H1 (cell line): ENCODE measurements at regions of chr5 and their contacts with region 1.

Region 1: DNA sequence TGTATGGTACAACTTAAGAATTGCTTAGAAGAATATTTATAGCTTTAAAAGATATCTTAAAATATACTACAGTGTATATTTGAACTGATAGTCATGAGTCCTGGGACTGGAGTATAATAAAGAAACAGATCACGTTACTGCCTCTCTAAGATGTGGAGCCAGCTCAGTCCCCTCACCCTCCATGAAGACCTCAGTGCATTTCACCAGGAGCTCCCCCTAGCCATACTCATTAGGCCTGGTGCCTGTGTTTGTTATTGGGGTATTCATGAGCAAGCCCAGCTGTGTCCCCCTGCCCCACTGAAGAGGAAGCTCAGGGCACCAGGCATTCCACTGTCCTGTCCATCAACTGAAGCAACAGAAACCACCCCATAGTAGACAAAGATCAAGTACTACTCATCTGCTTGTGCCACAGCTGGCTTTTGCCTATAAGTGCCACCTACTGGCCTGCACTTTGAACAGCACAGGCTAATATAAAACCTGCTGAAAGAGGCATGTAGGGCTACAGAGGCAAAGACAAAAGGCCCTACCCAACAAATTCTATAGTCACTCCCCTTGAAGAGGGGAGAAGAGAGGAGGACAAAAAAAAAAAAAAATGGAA is 850.2 kb upstream of the NUDT12 start:
- DNase-seq: peak; percentile 13 to 51
- H3K4me3 ChIP-seq: no peak overlapping the region
- H3K27ac ChIP-seq: no peak overlapping the region
- H3K4me1 ChIP-seq: peaks cover 0 to 4% (median 0%) of the 10 kb centered on the region in 4 experiments; a peak in 1 of 7 replicates
- H3K27me3 ChIP-seq: no peaks in the 10 kb centered on the region
- CTCF ChIP-seq: peak in 2 of 3 experiments; percentile 58 to 73; a peak in 3 of 4 replicates
- EP300 ChIP-seq: no peak
- POLR2A ChIP-seq: no peak
- RAD21 ChIP-seq: peak; percentile 56 to 77

Region 2: GRCh38 chr5:104400941-104401340 is 11.8 kb before region 1 on chr5:
- CTCF ChIA-PET with region 1: interaction called, 10 read pairs
- POLR2A ChIA-PET with region 1: no interaction called
- DNase-seq: no peak
- H3K4me3 ChIP-seq: no peak overlapping the region
- H3K27ac ChIP-seq: no peak overlapping the region
- H3K4me1 ChIP-seq: no peaks in the 10 kb centered on the region
- H3K27me3 ChIP-seq: no peaks in the 10 kb centered on the region
- CTCF ChIP-seq: no peak
- EP300 ChIP-seq: no peak
- POLR2A ChIP-seq: no peak
- RAD21 ChIP-seq: no peak